Mammary epithelial cell (primary cell): ENCODE measurements at regions of chr7 and their contacts with region 1.

Region 1: GRCh38 chr7:129576138-129576537 is 35.4 kb upstream of the NRF1 start:
- DNase-seq: no peak
- H3K4me3 ChIP-seq: no peak overlapping the region
- H3K27ac ChIP-seq: no peak overlapping the region
- H3K4me1 ChIP-seq: no peaks in the 10 kb centered on the region
- H3K27me3 ChIP-seq: no peaks in the 10 kb centered on the region
- CTCF ChIP-seq: no peak

Region 2: GRCh38 chr7:129543816-129544215 is 32.3 kb before region 1 on chr7:
- CTCF ChIA-PET with region 1: no interaction called
- dilution Hi-C with region 1: loop called (anchors 5 kb)
- in situ Hi-C with region 1: no loop called
- intact Hi-C with region 1: no loop called
- DNase-seq: no peak
- H3K4me3 ChIP-seq: no peak overlapping the region
- H3K27ac ChIP-seq: no peak overlapping the region
- H3K4me1 ChIP-seq: no peaks in the 10 kb centered on the region
- H3K27me3 ChIP-seq: no peaks in the 10 kb centered on the region
- CTCF ChIP-seq: no peak